ENCODE measurements at regions of chr22 and their contacts with region 1.

Region 1: DNA sequence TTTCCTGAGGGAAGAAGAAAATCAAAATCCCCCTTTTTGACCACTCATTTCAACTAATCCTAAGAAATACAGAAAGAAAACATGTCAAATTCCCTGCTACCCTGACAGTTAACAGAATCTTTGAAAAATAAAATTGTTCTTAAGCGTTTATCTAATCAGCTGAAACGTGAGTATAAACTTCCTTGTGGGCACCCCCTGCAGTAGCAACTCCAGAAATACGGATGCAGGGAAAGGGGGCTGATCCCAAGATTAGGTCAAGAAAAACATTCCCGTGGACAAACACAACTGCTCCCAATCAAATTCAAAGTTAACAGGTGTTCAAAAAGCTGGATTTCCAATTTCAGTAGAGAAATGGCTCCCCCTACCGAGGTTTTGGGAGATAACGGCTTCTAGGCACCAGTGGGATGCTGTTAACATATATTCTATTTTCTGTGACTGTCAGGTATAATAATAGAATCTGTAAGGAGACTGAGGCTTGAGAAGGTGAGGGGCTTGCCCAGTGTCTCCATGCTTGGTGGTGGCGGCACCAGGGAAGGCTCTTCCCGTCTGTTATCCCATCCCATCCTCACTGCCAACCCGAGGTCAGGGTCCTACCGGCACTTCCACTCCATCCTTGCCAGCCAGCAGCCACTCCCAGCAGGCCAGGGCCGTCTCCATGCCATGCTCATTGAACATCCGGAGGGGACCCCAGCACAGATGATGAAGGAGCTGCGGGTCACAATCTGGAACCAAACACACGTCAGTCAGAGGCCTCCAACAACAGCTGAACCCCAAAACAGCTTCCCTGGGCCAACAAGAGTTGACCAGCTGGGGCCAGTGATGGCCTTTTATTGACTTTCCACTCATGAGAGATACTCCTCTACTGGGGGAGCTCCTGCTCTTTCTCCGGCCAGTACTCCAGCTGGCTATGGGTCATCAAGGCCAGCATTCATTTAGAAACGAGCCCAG is 32.0 kb upstream of the SERPIND1 start:
- DNase-seq: no peak
- ATAC-seq: peak; percentile 52 to 76 (median 64)
- H3K4me3 ChIP-seq: no peak overlapping the region
- H3K27ac ChIP-seq: no peak overlapping the region
- H3K4me1 ChIP-seq: no peaks in the 10 kb centered on the region
- H3K27me3 ChIP-seq: no peaks in the 10 kb centered on the region
- CTCF ChIP-seq: peak; percentile 54 to 74 (median 66)
- POLR2A ChIP-seq: no peak

Region 2: DNA sequence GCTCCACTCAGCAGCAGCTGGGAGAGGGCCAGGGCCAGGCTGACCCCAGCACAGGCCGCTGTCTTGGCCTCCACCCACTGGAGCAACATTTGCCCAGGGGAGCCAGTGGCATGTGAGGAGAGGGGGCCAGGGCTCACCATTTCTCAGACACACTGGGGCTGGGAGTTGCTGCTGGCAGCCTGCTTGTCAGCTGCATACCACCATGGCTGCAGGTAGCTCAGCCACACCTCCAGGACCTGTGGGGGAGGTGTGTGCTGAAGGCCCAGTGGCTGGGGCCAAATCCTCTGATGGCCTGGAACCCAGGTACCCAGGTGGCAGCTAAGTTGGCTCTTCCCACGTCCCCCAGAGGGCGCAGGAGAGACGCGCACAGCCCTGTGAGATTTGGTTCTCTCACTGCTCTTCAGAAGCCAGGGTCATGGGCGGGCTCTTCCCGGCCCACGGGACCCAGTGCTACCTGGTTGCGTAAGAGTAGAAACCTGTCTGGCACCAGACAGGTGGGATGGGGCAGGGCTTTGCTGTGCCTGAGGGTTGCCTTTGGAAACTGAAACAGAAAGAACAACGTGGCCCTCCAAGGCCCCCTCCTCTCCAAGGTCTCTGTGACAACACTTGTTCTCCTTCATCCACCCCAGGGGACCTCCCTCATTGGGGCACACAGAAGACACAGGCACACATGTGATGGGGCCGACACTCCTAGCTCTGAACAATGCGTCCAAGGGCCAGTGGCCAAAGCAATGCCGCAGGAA is 135.7 kb before region 1 on chr22:
- intact Hi-C with region 1: loop called in 1 of 2 experiments (anchors 10 kb)
- DNase-seq: peak; percentile 84 to 90 (median 89)
- ATAC-seq: peak; percentile 96 to 99 (median 98)
- H3K4me3 ChIP-seq: no peak overlapping the region
- H3K27ac ChIP-seq: no peak overlapping the region
- H3K4me1 ChIP-seq: peaks cover 0 to 3% (median 0%) of the 10 kb centered on the region in 4 donors
- H3K27me3 ChIP-seq: no peaks in the 10 kb centered on the region
- CTCF ChIP-seq: peak; percentile 74 to 92 (median 86)
- POLR2A ChIP-seq: no peak

Region 3: GRCh38 chr22:20803696-20804324 is 61.9 kb after region 1 on chr22:
- intact Hi-C with region 1: no loop called
- DNase-seq: peak in 2 of 3 donors; percentile 54 to 59
- ATAC-seq: peak; percentile 75 to 83 (median 80)
- H3K4me3 ChIP-seq: no peak overlapping the region
- H3K27ac ChIP-seq: no peak overlapping the region
- H3K4me1 ChIP-seq: no peaks in the 10 kb centered on the region
- H3K27me3 ChIP-seq: no peaks in the 10 kb centered on the region
- CTCF ChIP-seq: peak; percentile 48 to 73 (median 52)
- POLR2A ChIP-seq: no peak